Activated T-helper 2 cell treated with anti-CD3 and anti-CD28 coated beads, Interferon-gamma antibody, Interleukin-2, Interleukin-4, amounts not matched to agents 10 μg/mL and 5 μg/mL and 100 μg/mL, durations not matched to agents 14 hours and 24 hours and 36 hours (primary cell): ENCODE measurements at regions of chr1 and their contacts with region 1.

Region 1: DNA sequence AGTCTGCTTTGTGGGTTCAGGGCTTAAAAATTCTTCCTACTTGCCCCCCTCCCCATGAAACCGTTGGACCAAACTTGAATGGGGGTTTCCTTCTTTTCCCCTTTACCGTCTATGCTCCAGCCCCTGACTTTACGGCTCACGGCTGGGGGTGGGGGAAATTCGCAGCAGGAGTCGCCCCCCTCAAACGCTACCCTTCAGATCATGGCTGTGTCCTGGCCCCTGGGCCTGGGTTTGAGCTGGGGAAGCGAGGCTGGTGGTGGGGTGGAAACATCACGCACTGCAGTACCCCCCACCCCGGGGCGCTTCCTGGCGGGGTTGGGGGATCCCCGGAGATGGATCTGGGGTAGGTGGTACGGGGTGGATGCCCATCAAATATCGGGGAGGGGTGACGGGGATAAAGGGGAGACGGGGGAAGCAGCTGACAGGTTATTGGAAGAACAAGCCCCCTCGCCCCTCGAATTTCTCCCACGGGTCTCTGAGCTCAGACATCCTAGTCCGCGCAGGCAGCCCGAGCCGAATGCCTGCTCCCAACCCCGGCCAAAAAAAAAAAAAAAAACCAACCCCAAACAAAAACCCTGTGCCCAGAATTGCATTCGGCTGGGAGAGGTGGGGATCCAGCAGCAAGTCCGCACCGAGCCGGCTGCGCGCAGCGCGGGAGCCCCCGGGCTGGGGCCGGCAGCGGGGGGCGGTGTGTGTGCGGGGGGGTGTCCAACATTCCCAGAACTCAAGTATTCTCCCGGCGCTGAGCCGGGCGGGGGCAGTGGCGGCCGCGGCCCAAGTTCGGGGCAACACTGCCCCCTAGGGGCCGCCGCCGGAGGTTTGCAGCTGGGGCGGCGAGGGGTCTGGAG is 59.0 kb upstream of the ACOT11 start:
- DNase-seq: peak; percentile 65
- H3K4me3 Mint-ChIP-seq: peak overlapping the region; percentile 81
- H3K27ac Mint-ChIP-seq: peak overlapping the region; percentile 74
- H3K4me1 Mint-ChIP-seq: peaks cover 19% of the 10 kb centered on the region
- H3K27me3 Mint-ChIP-seq: peaks cover 36% of the 10 kb centered on the region

Region 2: GRCh38 chr1:54070171-54070837 is 418.7 kb before region 1 on chr1:
- intact Hi-C with region 1: loop called (anchors 1 kb)
- DNase-seq: no peak
- H3K4me3 Mint-ChIP-seq: no peak overlapping the region
- H3K27ac Mint-ChIP-seq: no peak overlapping the region
- H3K4me1 Mint-ChIP-seq: no peaks in the 10 kb centered on the region
- H3K27me3 Mint-ChIP-seq: no peaks in the 10 kb centered on the region

Region 3: GRCh38 chr1:54180701-54181360 is 308.2 kb before region 1 on chr1:
- intact Hi-C with region 1: loop called (anchors 1 kb)
- DNase-seq: no peak
- H3K4me3 Mint-ChIP-seq: no peak overlapping the region
- H3K27ac Mint-ChIP-seq: no peak overlapping the region
- H3K4me1 Mint-ChIP-seq: no peaks in the 10 kb centered on the region
- H3K27me3 Mint-ChIP-seq: no peaks in the 10 kb centered on the region

Region 4: DNA sequence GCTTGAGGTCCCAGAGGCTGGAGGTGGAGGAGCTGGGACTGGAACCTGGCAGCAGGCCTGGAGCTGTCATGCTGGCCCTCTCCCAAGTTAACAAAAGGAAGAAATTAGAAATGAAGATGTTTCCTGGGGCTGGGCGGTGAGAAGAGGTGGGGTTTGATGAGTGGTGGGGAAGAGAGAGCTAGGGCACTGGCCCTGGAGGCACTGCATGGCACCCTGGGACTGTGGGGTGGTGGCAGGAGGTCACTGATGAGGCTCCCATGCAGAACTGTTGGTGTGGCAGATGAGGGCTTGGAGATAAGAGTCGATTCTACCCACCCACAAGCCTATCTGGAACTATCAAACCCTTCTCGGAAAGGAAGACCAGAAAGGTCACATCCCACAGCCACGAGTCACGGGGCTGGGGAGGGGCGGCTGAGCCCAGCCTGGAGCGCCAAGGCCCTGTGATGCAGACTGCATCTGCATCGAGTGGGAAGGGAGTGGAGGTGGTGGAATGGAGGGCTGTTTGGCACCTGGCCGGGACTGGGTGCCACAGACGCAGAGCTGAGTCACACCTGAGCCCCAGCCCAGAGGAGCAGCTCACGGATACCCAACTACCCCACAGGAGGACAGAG is 259.6 kb before region 1 on chr1:
- intact Hi-C with region 1: loop called (anchors 2 kb)
- DNase-seq: peak; percentile 23
- H3K4me3 Mint-ChIP-seq: peak overlapping the region; percentile 64
- H3K27ac Mint-ChIP-seq: peak overlapping the region; percentile 66
- H3K4me1 Mint-ChIP-seq: peaks cover 29% of the 10 kb centered on the region
- H3K27me3 Mint-ChIP-seq: no peaks in the 10 kb centered on the region

Region 5: DNA sequence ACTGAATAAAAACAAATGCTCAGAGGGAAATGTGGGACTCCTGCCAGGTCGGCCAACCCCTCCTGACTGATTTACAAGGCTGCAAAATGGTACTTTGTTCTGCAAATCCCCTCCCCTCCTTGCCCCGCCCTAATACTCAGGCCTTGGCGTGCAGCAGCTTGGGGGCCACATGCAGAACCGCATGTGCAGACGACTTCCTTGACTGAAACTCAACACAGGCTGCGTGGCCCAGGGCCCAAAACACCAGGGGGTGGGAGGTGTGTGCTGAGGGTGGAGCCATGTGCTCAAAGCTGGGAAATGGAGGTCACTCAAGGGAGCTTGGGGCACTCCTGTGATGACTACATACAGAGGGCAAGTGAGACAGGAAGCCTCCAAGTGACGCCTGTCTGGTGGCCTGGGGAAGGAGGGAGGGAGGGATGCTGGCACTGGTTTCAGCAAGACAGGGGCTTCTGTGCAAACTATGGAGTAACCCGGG is 201.8 kb before region 1 on chr1:
- intact Hi-C with region 1: loop called (anchors 2 kb)
- DNase-seq: peak; percentile 77
- H3K4me3 Mint-ChIP-seq: peak overlapping the region; percentile 74
- H3K27ac Mint-ChIP-seq: peak overlapping the region; percentile 96
- H3K4me1 Mint-ChIP-seq: peaks cover 72% of the 10 kb centered on the region
- H3K27me3 Mint-ChIP-seq: no peaks in the 10 kb centered on the region

Region 6: DNA sequence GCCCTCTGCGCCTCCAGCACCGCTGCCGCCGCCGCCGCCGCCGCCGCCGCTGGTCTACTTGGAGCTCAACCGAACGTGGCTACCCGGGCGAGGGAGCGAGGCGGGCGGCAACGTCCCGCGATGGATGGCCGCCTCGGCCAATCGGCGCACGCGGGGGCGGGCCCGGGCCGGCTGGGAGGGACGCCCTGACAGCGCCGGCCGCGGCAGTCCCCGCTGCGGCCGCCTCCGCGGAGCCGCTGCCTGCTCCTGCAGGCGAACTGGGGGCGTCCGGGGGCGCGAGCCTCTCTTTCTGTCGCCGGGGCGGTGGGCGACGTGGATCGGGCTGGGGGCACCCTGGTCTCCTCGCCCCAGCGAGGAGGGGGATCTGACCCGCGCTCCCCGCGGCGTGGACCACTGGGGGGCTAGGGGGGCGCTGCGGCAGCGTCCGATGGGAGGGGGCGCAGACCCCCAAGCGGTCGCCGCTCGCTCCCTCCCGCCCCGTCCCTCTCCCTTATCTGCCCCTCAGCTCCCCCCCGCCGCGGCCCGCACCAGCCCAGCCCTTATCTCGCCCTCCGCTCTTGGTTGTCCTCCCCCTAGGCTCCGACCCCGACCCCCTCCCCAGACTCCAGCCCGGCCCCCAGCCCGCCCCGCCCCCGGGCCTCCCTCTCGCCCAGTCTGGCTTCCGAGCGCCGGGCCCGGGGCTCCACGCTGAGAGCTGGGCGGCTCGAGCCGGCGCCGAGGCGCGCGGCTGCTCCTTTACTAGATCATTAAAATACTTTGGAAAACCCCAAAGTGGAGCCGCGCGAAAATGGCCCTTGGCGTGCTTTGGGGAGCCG is 82.5 kb before region 1 on chr1 and contains the start of gene SSBP3:
- intact Hi-C with region 1: loop called (anchors 1 kb)
- DNase-seq: peak; percentile 91
- H3K4me3 Mint-ChIP-seq: peak within 1 kb of the TSS; percentile 90
- H3K27ac Mint-ChIP-seq: peak within 1 kb of the TSS; percentile 94
- H3K4me1 Mint-ChIP-seq: peaks cover 58% of the 10 kb centered on the region
- H3K27me3 Mint-ChIP-seq: no peaks in the 10 kb centered on the region
- total RNA-seq, gene SSBP3: 84.4 and 89.9 TPM in 2 replicates

Region 7: DNA sequence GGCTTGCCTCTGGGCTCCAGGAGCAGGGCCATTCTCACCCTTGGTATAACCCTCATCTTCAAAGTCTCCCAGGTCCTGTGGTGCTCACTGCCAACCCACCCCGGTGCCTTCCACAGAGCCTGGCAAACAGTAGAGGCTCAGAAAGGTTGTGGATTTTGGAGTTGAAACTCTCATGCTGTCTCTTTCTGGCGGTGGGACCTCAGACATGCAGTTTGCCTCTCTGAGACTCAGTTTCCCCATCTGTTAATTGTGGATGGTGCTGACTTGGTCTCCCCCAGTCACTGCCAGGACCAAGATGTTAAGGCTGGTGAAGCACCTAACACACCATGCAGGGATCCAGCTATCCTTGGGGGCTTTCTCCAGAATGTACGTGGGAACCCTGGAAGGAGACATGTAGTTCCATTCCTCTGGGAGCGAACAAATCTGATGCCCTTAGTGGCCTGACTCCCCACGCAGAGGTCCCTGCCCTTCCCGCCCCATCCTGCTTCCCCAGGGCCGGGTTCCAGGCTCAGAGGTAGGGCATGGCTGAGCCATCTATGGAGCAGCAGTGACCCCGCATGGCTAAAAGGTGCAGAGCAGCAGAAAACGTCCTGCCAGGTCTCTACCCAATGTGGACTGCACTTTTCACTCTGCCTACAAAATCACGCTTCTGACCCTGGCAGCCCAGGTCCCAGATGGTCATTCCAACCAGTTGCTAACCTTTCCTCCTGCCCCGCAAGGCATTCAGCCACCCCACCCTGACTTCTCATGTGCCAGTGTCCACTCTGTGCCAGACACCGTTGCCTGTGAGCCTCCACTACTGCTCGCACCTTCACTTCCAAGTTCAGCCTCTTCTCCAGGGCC is 321.3 kb after region 1 on chr1:
- intact Hi-C with region 1: loop called (anchors 5 kb)
- DNase-seq: peak; percentile 51
- H3K4me3 Mint-ChIP-seq: no peak overlapping the region
- H3K27ac Mint-ChIP-seq: no peak overlapping the region
- H3K4me1 Mint-ChIP-seq: peaks cover 12% of the 10 kb centered on the region
- H3K27me3 Mint-ChIP-seq: no peaks in the 10 kb centered on the region